ENCODE measurements at regions of chr5 and their contacts with region 1.

Region 1: GRCh38 chr5:138449501-138450239 is 10.8 kb downstream of the REEP2 start:
- DNase-seq: no peak
- H3K4me3 ChIP-seq: no peak overlapping the region
- CTCF ChIP-seq: peak; percentile 99

Region 2: DNA sequence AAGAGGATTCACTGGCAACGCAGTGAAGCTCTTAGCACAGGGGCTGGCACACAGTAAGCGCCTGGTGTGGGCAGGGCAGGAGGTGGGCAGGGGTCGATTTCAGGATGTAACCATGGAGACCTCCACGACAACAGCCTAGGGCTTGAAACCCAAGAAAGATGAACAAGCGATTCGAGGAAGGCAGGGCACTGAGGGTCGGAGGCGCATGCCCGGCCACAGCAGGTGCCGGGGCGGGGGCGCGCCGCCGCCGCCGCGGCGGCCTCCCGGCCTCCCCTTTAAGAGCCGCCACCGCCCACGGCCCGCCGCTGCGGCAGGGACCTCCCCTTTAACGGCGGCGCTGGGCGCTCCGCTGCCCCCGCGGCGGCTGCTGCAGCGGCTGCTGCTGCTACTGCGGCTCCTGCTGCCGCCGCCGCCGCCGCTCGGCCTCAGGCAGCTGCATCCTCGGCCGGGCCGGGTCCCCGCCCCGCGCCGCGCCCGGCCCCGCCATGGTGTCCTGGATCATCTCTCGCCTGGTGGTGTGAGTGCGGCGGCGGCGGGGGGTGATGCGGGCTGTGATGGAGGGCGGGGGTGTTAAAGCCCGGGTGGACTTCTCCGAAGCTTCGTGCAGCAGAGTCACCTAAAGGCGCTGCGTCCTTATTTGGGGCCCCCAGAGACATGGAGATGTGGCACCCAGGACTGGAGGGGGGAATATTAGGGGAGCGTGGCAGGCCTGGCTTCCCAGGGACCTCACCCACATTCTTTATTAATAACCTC is 10.8 kb before region 1 on chr5 and contains the start of gene REEP2:
- CTCF ChIA-PET with region 1: interaction called, 86 read pairs
- POLR2A ChIA-PET with region 1: no interaction called
- DNase-seq: no peak
- H3K4me3 ChIP-seq: peak within 1 kb of the TSS; percentile 65
- CTCF ChIP-seq: no peak

Region 3: GRCh38 chr5:138482638-138483037 is 33.0 kb after region 1 on chr5:
- CTCF ChIA-PET with region 1: interaction called, 11 read pairs
- POLR2A ChIA-PET with region 1: no interaction called
- DNase-seq: no peak
- H3K4me3 ChIP-seq: no peak overlapping the region
- CTCF ChIP-seq: no peak

Region 4: DNA sequence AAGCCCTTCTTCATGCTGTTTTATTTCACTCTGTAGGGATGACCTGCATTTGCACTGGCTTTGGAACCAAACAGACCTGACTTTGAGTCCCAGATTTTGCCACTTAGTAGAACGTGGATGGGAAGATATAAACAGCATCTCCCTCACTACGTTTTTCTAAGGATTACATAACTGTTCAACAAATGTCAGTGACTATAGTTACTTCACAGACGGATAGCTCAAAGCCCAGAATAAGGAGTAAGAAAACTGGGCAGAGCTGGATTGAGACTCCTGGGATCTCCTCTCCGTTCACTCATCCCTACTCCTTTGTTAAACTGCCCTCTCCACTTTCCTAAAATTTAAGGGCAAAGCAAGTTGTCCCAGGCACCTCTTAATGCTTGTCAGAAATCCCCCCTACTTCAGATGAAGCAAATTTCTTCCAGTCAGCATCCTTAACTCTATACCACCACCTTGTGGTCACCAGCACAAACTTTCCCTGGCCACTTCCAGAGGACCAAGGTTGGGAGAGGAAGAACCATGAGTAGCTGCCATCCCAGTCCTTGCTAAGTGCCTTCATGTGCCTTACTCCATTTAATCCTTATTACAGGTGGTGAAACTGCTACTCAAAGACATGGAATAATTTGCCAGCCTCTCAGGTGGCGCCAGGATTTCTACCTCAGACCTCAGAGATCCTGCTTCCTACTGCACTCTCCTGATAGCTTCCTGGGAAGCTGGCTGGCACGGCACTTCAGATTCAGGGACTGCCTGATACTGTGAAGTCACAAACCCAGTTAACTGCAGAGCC is 54.0 kb after region 1 on chr5:
- CTCF ChIA-PET with region 1: interaction called, 407 read pairs
- POLR2A ChIA-PET with region 1: no interaction called
- DNase-seq: no peak
- H3K4me3 ChIP-seq: no peak overlapping the region
- CTCF ChIP-seq: peak; percentile 71

Region 5: DNA sequence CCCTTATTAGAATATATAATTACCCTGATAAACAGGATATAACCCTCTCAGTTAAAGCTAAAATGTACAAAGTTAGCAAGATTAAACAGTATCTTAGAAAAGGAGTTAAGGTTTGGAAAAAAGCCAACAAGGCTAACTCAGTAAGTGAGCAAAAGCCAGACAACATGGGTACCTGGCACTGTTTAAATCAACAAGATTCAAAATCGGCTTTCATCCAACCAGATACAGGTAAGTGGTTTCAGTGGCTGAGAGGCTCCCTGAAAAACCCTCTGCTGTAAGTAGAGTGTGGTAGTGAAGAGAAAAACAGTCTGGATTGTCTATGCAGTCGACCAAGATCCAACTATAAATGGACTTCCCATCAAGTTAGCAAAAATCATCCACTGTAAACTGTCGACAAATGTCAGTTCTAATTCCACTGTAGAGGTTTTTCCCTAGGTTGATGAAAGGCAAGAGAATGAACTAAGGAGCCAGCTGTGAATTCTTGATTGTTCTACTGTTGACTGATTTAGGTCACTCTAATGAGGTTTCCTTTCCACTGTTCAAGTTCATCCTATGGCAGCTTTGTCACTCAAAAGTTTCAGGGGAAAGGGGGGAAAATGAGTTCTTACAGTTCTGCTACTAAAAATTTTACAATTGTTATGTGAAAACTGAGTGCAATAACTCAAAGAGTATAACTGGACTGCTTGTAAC is 66.0 kb after region 1 on chr5:
- CTCF ChIA-PET with region 1: interaction called, 42 read pairs
- POLR2A ChIA-PET with region 1: no interaction called
- DNase-seq: no peak
- H3K4me3 ChIP-seq: no peak overlapping the region
- CTCF ChIP-seq: no peak

Region 6: DNA sequence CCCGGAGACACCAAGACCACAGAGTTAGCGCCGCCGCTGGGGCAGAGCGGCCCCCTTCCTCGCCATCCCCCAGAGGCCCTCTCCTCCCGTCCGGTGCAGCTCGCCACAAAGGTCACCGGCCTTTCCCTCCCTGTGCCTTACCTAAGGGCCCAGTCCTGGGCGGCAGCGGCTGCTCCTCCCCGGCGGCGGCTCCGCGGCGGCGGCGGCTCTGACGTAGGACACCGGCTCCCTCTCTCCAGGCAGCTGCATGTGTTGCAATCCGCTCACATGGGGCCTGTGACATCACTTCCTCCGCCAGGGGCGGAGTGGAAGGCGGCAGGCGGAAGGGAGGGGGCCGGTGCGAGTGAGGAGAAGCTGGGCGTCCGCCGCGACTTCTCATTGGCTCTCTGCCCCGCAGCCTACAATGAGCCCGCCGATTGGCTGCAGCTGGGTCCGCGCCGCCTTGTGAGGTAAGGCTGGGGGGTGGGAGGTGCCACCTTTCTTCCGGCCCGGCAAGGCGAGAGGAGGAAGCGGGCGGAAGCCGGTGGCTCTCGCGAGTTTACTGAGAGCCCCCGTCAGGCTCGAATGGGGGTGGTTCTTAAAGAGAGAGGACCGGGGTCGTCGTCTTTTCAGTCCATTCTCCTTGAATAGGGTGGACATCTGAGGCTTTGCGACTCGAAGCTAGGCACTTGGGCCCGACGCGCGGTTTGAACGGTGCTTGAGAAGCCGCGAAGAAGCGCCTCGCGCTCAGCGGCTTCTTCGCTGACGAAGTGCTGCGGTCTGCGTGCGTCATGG is 93.5 kb after region 1 on chr5 and contains the start of gene ETF1:
- CTCF ChIA-PET with region 1: interaction called, 43 read pairs
- POLR2A ChIA-PET with region 1: interaction called, 3 read pairs
- DNase-seq: peak; percentile 97
- H3K4me3 ChIP-seq: peak within 1 kb of the TSS; percentile 97
- CTCF ChIP-seq: no peak

Region 7: DNA sequence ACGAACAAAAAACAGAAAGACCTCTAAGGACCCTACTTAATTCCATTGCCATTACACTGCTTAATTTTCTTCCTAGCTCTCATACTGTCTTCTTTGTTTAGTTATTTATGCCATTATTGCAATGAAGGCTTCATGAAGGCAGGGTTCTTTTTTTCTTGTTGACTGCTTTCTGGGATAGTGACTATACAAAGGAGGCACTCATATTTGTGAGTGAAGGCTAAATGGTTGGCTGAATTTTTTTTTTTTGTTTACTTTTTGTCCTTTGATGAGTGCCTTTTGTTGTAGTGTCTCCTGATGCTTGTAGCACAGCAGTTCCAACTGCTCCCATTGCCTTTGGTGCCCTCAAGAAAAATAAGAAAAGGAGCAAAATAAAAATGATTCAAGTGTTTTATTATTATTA is 321.3 kb after region 1 on chr5:
- CTCF ChIA-PET with region 1: no interaction called
- POLR2A ChIA-PET with region 1: no interaction called
- DNase-seq: no peak
- H3K4me3 ChIP-seq: no peak overlapping the region
- CTCF ChIP-seq: no peak